Dendritic cell treated with granulocyte-macrophage colony-stimulating factor and Interleukin-4, amounts not matched to agents 40 ng/mL and 50 ng/mL, for 4 days (primary cell): ENCODE measurements at regions of chr5 and their contacts with region 1.

Region 1: GRCh38 chr5:57298295-57298984 is 124.6 kb downstream of the GPBP1 start:
- H3K4me3 Mint-ChIP-seq: no peak overlapping the region
- H3K27ac Mint-ChIP-seq: no peak overlapping the region
- H3K4me1 Mint-ChIP-seq: peaks cover 13% of the 10 kb centered on the region
- H3K27me3 Mint-ChIP-seq: no peaks in the 10 kb centered on the region

Region 2: GRCh38 chr5:57209351-57210040 is 88.9 kb before region 1 on chr5:
- intact Hi-C with region 1: no loop called
- H3K4me3 Mint-ChIP-seq: no peak overlapping the region
- H3K27ac Mint-ChIP-seq: no peak overlapping the region
- H3K4me1 Mint-ChIP-seq: peaks cover 49% of the 10 kb centered on the region
- H3K27me3 Mint-ChIP-seq: no peaks in the 10 kb centered on the region

Region 3: DNA sequence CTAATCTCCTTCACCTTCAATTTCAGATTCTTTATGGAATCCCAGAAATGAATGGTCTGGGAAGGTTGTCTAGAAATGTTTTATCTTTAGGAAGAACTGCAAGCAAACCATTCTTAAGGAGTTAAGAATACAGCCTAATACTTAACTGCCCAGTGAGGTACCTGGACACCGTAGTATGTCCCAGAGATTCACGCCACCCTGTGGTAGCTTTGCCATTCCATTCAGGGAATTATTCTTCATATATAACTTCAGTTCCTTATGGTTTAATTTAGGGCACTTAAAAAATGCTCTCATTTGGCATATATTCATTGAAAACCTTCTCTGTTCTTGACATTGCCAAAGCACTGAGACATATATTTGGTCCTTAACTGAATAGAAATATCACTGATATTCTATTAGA is 134.4 kb after region 1 on chr5:
- intact Hi-C with region 1: loop called (anchors 2 kb)
- H3K4me3 Mint-ChIP-seq: no peak overlapping the region
- H3K27ac Mint-ChIP-seq: no peak overlapping the region
- H3K4me1 Mint-ChIP-seq: no peaks in the 10 kb centered on the region
- H3K27me3 Mint-ChIP-seq: no peaks in the 10 kb centered on the region

Region 4: DNA sequence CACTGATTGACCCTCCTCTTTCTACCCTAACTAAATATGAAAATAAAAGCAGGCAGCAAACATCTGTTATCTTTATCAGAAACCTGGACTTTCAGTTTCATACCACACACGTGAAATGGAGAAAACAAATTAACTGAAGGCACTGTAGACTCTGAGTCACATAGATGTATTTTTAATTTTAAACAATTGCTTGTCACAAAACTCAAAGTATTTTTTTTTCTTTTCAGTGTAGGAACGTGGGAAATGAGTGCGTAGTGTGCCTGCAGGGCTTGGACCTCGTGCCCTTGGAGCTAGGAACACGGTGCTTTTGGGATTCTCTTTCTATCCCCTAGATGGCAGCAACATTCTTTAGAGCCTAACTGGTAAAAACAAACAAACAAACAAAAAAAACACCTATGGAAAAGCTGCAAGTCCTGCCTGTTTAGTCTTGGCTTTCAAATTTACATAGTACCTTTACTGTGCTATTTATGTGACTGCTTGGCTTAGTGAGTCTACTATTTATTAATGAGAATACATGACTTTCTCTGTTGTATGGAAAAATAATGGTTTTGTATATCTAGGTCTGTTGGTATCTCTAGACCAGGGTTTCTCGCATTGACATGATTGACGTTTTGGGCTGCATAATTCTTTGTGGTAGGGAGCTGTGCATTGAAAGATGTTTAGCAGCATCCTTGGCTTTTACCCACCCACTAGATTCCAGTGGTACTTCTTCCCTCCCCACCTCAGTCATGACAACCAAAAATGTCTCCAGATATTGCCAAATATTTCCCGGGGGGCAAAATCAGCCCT is 201.0 kb after region 1 on chr5:
- intact Hi-C with region 1: loop called (anchors 10 kb)
- H3K4me3 Mint-ChIP-seq: peak overlapping the region; percentile 45
- H3K27ac Mint-ChIP-seq: no peak overlapping the region
- H3K4me1 Mint-ChIP-seq: peaks cover 8% of the 10 kb centered on the region
- H3K27me3 Mint-ChIP-seq: peaks cover 2% of the 10 kb centered on the region

Region 5: GRCh38 chr5:57779383-57780223 is 481.2 kb after region 1 on chr5:
- intact Hi-C with region 1: loop called (anchors 5 kb)
- H3K4me3 Mint-ChIP-seq: no peak overlapping the region
- H3K27ac Mint-ChIP-seq: no peak overlapping the region
- H3K4me1 Mint-ChIP-seq: no peaks in the 10 kb centered on the region
- H3K27me3 Mint-ChIP-seq: no peaks in the 10 kb centered on the region